ENCODE measurements at regions of chr9 and their contacts with region 1.

Region 1: GRCh38 chr9:136482793-136483588 is at the start of gene SEC16A:
- DNase-seq: peak; percentile 96
- H3K4me3 ChIP-seq: peak within 1 kb of the TSS; percentile 97
- H3K27ac ChIP-seq: peak within 1 kb of the TSS; percentile 91
- H3K4me1 ChIP-seq: peaks cover 16% of the 10 kb centered on the region
- CTCF ChIP-seq: no peak
- total RNA-seq, gene SEC16A: 15.5 and 23.7 TPM in 2 replicates

Region 2: GRCh38 chr9:136312436-136312835 is 170.6 kb before region 1 on chr9:
- CTCF ChIA-PET with region 1: no interaction called
- POLR2A ChIA-PET with region 1: no interaction called
- intact Hi-C with region 1: no loop called
- DNase-seq: peak; percentile 45
- H3K4me3 ChIP-seq: no peak overlapping the region
- H3K27ac ChIP-seq: no peak overlapping the region
- H3K4me1 ChIP-seq: no peaks in the 10 kb centered on the region
- CTCF ChIP-seq: peak; percentile 67

Region 3: GRCh38 chr9:136410500-136411287 is 72.3 kb before region 1 on chr9 and contains the starts of genes ENTR1 and PMPCA:
- CTCF ChIA-PET with region 1: no interaction called
- POLR2A ChIA-PET with region 1: no interaction called
- intact Hi-C with region 1: loop called (anchors 2 kb)
- DNase-seq: peak; percentile 93
- H3K4me3 ChIP-seq: peak within 1 kb of the TSS; percentile 92
- H3K27ac ChIP-seq: peak within 1 kb of the TSS; percentile 56
- H3K4me1 ChIP-seq: peaks cover 28% of the 10 kb centered on the region
- CTCF ChIP-seq: no peak
- total RNA-seq, gene ENTR1: 87.2 and 103 TPM in 2 replicates
- total RNA-seq, gene PMPCA: 53.3 and 60.4 TPM in 2 replicates

Region 4: GRCh38 chr9:136439550-136440408 is 43.2 kb before region 1 on chr9 and contains the start of gene INPP5E:
- CTCF ChIA-PET with region 1: no interaction called
- POLR2A ChIA-PET with region 1: no interaction called
- intact Hi-C with region 1: loop called (anchors 2 kb)
- DNase-seq: peak; percentile 83
- H3K4me3 ChIP-seq: peak within 1 kb of the TSS; percentile 87
- H3K27ac ChIP-seq: peak within 1 kb of the TSS; percentile 49
- H3K4me1 ChIP-seq: peaks cover 23% of the 10 kb centered on the region
- CTCF ChIP-seq: peak; percentile 65
- total RNA-seq, gene INPP5E: 16.7 and 20.2 TPM in 2 replicates

Region 5: DNA sequence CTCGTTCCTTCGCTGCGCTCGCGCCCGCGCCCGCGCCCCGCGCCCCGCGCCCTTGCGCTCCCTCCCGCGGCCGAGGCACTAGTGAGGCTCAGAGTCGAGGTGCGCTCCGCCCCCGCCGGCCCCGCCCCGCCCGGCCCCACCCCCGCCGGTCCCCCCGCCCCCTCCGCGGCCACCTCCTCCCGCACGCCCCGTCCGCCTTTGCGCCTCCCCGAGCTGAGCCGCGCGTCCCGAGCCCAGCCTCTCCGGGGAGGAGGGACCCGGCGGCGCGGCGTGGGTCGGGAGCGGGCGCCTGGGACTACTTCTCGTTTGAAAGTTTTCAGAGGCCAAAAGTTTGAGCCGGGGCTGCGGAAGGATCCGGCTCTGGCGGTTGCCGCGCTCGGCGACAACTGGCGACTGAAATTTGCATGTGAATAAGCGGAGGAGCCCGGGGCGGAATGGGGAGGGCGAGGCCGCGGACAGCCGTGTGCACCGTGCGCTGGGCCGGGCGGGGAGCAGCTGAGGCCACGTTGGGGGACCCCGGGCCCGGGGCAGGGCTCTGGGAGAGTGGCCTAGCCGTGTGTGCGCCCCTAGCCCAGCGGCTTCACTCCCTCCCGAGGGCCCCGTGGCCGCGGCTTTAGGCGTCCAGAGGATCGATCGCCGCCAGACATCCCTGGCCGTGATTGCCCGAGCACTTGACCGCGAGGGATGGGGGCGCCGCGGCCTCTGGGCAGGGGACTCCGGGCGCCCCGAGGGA is 63.1 kb after region 1 on chr9 and contains the start of gene NOTCH1:
- CTCF ChIA-PET with region 1: no interaction called
- POLR2A ChIA-PET with region 1: no interaction called
- intact Hi-C with region 1: loop called (anchors 1 kb)
- DNase-seq: peak; percentile 91
- H3K4me3 ChIP-seq: peak within 1 kb of the TSS; percentile 77
- H3K27ac ChIP-seq: peak within 1 kb of the TSS; percentile 88
- H3K4me1 ChIP-seq: peaks cover 26% of the 10 kb centered on the region
- CTCF ChIP-seq: no peak
- total RNA-seq, gene NOTCH1: 9.3 and 17.6 TPM in 2 replicates

Region 6: DNA sequence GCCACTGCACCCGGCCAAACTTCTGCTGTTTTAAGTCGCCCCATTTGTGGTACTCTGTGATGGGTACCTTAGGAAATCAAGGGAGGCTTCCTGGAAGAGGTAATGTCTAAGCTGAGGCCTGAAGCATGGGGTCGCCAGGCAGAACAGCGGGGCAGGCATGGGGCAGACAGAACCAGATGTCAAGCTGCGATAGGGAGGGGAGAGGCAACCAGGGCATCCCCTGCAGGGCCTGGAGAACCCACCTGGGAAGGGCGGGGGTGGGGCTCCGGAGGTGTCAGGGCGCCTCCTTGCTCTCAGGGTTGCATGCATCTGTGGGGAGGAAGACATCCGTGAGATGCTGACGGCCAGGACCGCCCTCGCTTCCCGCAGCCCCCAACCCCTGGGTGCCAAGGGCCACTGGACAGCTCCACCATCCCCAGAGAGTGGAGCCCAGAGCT is 278.6 kb after region 1 on chr9:
- CTCF ChIA-PET with region 1: interaction called, 12 read pairs
- POLR2A ChIA-PET with region 1: no interaction called
- intact Hi-C with region 1: no loop called
- DNase-seq: no peak
- H3K4me3 ChIP-seq: no peak overlapping the region
- H3K27ac ChIP-seq: no peak overlapping the region
- H3K4me1 ChIP-seq: peaks cover 3% of the 10 kb centered on the region
- CTCF ChIP-seq: no peak

Measured in OCI-LY7 (cell line).